Right cardiac atrium (tissue), 5 donors: ENCODE measurements at regions of chr15 and their contacts with region 1.

Region 1: GRCh38 chr15:89760303-89761008 is 9.4 kb upstream of the MESP1 start:
- DNase-seq: peak; percentile 79 to 94 (median 93)
- ATAC-seq: peak; percentile 86 to 90
- H3K4me3 ChIP-seq: no peak overlapping the region
- H3K27ac ChIP-seq: no peak overlapping the region
- H3K4me1 ChIP-seq: no peaks in the 10 kb centered on the region
- H3K27me3 ChIP-seq: no peaks in the 10 kb centered on the region

Region 2: DNA sequence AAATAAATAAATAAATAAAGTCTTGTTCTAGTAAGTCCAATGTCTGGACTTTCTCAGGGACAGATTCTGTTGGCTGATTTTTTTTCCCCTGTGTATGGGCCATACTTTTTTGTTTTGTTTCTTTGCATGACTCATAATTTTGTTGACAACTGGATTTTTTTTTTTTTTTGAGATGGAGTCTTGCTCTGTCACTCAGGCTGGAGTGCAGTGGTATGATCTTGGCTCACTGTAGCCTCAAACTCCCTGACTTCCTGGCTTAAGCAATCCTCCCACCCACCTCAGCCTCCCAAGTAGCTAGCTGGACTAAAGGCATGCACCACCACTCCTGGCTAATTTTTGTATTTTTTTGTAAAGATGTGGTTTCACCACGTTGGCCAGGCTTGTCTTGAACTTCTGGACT is 146.3 kb before region 1 on chr15:
- intact Hi-C with region 1: no loop called
- DNase-seq: no peak
- ATAC-seq: no peak
- H3K4me3 ChIP-seq: no peak overlapping the region
- H3K27ac ChIP-seq: no peak overlapping the region
- H3K4me1 ChIP-seq: no peaks in the 10 kb centered on the region
- H3K27me3 ChIP-seq: no peaks in the 10 kb centered on the region

Region 3: GRCh38 chr15:89828241-89829082 is 68.0 kb after region 1 on chr15:
- intact Hi-C with region 1: loop called in 1 of 4 experiments (anchors 10 kb)
- DNase-seq: peak; percentile 71 to 91 (median 90)
- ATAC-seq: peak; percentile 84 to 85
- H3K4me3 ChIP-seq: no peak overlapping the region
- H3K27ac ChIP-seq: no peak overlapping the region
- H3K4me1 ChIP-seq: peaks cover 11% of the 10 kb centered on the region
- H3K27me3 ChIP-seq: no peaks in the 10 kb centered on the region

Region 4: GRCh38 chr15:89874926-89875564 is 114.6 kb after region 1 on chr15:
- intact Hi-C with region 1: loop called (anchors 2 to 5 kb)
- DNase-seq: peak; percentile 83 to 94 (median 90)
- ATAC-seq: peak; percentile 91 to 94
- H3K4me3 ChIP-seq: no peak overlapping the region
- H3K27ac ChIP-seq: no peak overlapping the region
- H3K4me1 ChIP-seq: no peaks in the 10 kb centered on the region
- H3K27me3 ChIP-seq: no peaks in the 10 kb centered on the region

Region 5: DNA sequence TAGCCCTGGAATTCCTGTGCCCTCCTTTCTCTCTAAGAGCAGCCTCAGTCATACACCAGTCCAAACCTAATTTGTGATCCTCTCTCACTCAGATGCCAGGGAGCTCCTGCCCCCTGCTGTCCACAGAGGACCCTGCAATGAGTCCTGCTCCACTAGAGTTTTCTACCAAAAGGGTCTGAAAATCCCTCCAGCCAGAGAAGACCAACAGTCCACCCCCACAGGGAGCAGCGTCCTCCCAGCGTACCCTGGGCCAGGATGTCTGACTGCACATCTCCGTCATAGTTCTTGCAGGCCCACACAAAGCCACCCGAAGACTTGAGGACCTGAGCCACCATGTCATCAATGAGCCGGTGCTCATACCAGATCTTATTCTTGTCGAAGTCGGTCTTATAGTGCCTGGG is 326.4 kb after region 1 on chr15:
- intact Hi-C with region 1: loop called in 1 of 4 experiments (anchors 10 kb)
- DNase-seq: no peak
- ATAC-seq: peak in 1 of 2 donors; percentile 41
- H3K4me3 ChIP-seq: no peak overlapping the region
- H3K27ac ChIP-seq: no peak overlapping the region
- H3K4me1 ChIP-seq: no peaks in the 10 kb centered on the region
- H3K27me3 ChIP-seq: no peaks in the 10 kb centered on the region

Region 6: GRCh38 chr15:90412356-90413194 is 652.1 kb after region 1 on chr15:
- intact Hi-C with region 1: no loop called
- DNase-seq: no peak
- ATAC-seq: peak; percentile 92 to 93
- H3K4me3 ChIP-seq: no peak overlapping the region
- H3K27ac ChIP-seq: no peak overlapping the region
- H3K4me1 ChIP-seq: peaks cover 15% of the 10 kb centered on the region
- H3K27me3 ChIP-seq: no peaks in the 10 kb centered on the region